Activated B cell treated with CpG ODN at 0.5 μM for 24 hours (primary cell): ENCODE measurements at regions of chr17 and their contacts with region 1.

Region 1: DNA sequence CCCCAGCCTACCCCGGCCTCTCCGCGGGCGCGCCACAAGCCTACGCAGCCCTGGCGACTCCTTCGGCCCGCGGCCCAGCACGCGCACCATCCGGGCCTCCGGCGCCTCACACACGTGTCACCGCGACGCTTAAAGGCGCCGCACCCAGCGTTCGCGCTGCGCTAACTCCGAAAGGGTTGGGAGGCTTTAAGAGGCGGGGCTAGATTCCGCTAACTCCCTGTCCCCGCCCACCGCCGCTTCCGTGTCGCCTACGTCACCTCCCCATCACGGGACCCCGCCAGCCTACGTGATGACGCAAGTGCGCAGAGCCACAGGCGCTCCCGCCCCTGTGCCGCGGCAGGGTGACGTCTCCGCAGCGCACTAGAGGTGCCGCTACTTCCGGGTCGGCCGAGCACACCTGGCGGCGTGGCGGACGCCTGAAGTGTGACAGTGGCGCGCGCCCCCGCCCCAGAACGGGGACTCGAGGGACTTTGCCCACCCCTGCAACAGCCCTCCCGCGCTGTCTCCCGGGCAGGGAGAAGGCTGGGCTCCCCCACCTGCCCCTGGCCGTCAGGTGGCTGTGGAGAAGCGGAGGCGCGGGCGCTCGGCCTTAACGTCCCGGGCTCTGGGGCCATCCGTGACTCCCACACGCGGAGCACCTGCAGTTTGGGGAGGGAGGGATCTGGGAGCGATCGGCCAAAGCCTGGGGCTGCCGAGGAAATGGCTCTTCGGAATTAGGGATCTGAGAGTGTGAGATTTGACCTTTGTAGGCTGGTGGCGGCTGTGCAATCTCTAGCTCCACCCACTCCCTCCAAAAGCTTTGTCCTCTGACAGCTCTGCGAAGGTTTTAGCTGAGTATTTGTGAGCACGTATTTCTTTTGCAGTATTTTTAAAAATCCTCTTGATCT is at the start of gene USP36:
- DNase-seq: peak; percentile 99
- ATAC-seq: peak; percentile 85
- H3K4me3 Mint-ChIP-seq: peak within 1 kb of the TSS; percentile 93
- H3K27ac Mint-ChIP-seq: peak within 1 kb of the TSS; percentile 94
- H3K4me1 Mint-ChIP-seq: peaks cover 42% of the 10 kb centered on the region
- H3K27me3 Mint-ChIP-seq: no peaks in the 10 kb centered on the region
- CTCF ChIP-seq: no peak
- total RNA-seq, gene USP36: 93.8 and 107 TPM in 2 replicates

Region 2: DNA sequence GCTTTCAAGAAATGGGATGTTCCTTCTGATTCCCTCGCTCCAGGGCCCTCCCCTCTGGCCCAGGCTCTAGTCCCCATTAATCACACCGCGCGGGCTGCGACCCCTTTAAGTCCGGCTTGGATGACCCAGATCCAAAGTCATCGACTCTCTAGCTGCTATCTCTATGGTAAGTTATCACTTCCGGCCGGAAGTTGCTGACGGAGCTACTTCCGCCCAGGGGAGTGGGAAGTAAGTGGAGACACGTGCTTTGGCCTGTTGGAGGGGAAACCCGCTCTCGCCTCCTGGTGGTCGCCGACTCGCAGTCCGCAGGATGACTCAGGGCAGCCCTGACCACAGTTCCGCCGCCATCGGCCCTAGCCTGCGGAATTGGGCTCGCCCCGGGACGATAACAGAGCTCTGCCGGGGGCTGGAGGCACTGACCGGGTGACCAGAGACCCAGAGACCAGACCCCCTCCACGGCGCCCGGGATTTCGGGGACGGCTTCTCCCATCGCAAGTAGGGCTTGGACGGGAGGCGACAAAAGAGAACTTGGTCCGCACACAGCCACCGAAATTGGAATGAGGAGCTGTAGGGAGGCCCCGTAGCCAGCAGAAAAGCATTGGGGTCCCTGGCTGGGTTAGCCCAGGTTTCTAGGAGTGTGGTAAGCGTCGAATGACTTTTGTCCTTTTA is 1752.4 kb before region 1 on chr17:
- CTCF ChIA-PET with region 1: no interaction called
- POLR2A ChIA-PET with region 1: no interaction called
- intact Hi-C with region 1: loop called (anchors 2 kb)
- DNase-seq: peak; percentile 84
- ATAC-seq: peak; percentile 89
- H3K4me3 Mint-ChIP-seq: peak overlapping the region; percentile 95
- H3K27ac Mint-ChIP-seq: peak overlapping the region; percentile 95
- H3K4me1 Mint-ChIP-seq: peaks cover 52% of the 10 kb centered on the region
- H3K27me3 Mint-ChIP-seq: peaks cover 3% of the 10 kb centered on the region
- CTCF ChIP-seq: no peak

Region 3: DNA sequence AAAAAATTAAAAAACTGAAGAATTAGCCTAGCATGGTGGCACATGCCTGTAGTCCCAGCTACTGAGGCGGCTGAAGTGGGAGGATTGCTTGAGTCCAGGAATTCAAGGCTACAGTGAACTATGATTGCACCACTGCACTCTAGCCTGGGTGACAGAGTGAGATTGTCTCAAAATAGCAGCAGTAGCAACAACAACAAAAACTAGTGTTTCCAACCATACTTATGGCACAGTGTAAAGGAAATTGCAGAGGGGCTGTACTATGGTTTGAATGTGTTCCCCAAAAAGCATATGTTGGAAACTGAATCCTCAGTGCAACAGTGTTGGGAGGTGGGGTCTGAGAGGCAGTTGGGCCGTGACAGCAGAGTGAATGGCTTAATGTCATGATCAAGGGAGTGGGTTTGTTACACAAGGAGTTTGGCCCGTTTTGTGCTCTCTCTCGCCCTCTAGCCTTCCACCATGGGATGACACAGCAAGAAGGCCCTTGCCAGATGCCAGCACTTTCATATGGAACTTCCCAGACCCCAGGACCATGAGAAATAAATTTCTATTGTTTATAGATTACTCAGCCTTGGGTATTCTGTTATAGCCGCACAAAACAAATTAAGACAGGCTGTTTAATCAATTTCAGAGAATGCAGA is 392.5 kb before region 1 on chr17:
- CTCF ChIA-PET with region 1: no interaction called
- POLR2A ChIA-PET with region 1: no interaction called
- intact Hi-C with region 1: loop called (anchors 5 kb)
- DNase-seq: no peak
- ATAC-seq: no peak
- H3K4me3 Mint-ChIP-seq: no peak overlapping the region
- H3K27ac Mint-ChIP-seq: no peak overlapping the region
- H3K4me1 Mint-ChIP-seq: peaks cover 8% of the 10 kb centered on the region
- H3K27me3 Mint-ChIP-seq: peaks cover 5% of the 10 kb centered on the region
- CTCF ChIP-seq: no peak

Region 4: GRCh38 chr17:78484300-78485246 is 356.4 kb before region 1 on chr17:
- CTCF ChIA-PET with region 1: no interaction called
- POLR2A ChIA-PET with region 1: no interaction called
- intact Hi-C with region 1: no loop called
- DNase-seq: peak; percentile 62
- ATAC-seq: peak; percentile 98
- H3K4me3 Mint-ChIP-seq: peak overlapping the region; percentile 75
- H3K27ac Mint-ChIP-seq: no peak overlapping the region
- H3K4me1 Mint-ChIP-seq: peaks cover 11% of the 10 kb centered on the region
- H3K27me3 Mint-ChIP-seq: peaks cover 15% of the 10 kb centered on the region
- CTCF ChIP-seq: no peak

Region 5: GRCh38 chr17:78497115-78497540 is 343.8 kb before region 1 on chr17:
- CTCF ChIA-PET with region 1: interaction called, 7 read pairs
- POLR2A ChIA-PET with region 1: no interaction called
- intact Hi-C with region 1: loop called (anchors 1 kb)
- DNase-seq: peak; percentile 26
- ATAC-seq: peak; percentile 77
- H3K4me3 Mint-ChIP-seq: no peak overlapping the region
- H3K27ac Mint-ChIP-seq: no peak overlapping the region
- H3K4me1 Mint-ChIP-seq: no peaks in the 10 kb centered on the region
- H3K27me3 Mint-ChIP-seq: no peaks in the 10 kb centered on the region
- CTCF ChIP-seq: peak; percentile 19

Region 6: DNA sequence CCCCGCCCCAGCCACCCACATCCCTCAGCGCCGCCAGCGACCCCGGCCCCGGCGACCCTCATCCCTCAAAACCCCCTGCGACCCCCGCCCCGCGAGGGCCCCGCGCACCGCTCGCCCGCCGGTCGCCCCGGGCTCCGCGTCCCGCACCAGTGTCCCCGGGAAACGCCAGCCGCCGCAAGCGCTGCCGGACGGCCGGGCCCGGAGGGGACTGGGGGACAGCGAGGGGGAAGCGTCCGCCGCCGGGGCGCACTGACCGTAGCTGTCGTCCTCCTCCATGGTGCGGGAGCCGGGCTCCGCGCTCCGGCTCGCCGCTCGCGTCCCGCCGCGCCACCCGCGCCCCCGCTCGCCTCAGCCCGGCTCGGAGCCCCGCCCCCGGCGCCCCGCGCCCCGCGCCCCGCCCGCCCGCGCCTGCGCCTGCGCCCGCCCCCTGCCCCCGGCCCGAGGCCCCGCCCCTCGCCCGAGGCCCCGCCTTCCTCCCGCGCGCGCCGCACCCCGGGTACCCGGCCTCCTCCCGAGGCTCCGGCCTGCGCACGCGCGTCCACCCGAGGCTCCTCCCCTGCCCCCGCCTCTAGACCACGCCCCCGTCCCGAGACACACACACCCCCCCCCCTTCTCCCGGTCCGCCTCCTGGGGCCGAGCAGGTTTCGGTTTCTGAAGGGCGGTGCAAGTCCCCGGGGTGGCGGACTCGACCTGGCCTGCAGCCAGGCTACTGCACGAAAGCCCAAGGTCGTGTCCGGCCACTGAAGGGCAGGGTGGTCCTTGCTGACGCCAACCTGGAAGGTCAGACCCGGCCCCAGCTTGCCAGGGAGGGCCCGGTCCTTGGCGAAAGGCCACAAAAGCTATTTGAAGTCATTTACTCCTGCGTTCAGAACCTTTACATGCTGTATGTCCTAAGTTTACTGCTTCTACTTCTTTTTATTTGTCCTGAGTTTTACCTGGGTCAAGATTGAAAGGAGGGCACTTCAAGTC is 58.7 kb before region 1 on chr17 and contains the start of gene CYTH1:
- CTCF ChIA-PET with region 1: no interaction called
- POLR2A ChIA-PET with region 1: interaction called, 4 read pairs
- intact Hi-C with region 1: loop called (anchors 2 kb)
- DNase-seq: peak; percentile 98
- ATAC-seq: peak; percentile 80
- H3K4me3 Mint-ChIP-seq: peak within 1 kb of the TSS; percentile 92
- H3K27ac Mint-ChIP-seq: peak within 1 kb of the TSS; percentile 93
- H3K4me1 Mint-ChIP-seq: peaks cover 40% of the 10 kb centered on the region
- H3K27me3 Mint-ChIP-seq: no peaks in the 10 kb centered on the region
- CTCF ChIP-seq: no peak
- total RNA-seq, gene CYTH1: 368 and 391 TPM in 2 replicates

Region 7: GRCh38 chr17:78822552-78822951 is 18.4 kb before region 1 on chr17:
- CTCF ChIA-PET with region 1: no interaction called
- POLR2A ChIA-PET with region 1: no interaction called
- intact Hi-C with region 1: no loop called
- DNase-seq: no peak
- ATAC-seq: no peak
- H3K4me3 Mint-ChIP-seq: no peak overlapping the region
- H3K27ac Mint-ChIP-seq: no peak overlapping the region
- H3K4me1 Mint-ChIP-seq: peaks cover 21% of the 10 kb centered on the region
- H3K27me3 Mint-ChIP-seq: no peaks in the 10 kb centered on the region
- CTCF ChIP-seq: no peak

Region 8: GRCh38 chr17:78890498-78890897 is 49.5 kb after region 1 on chr17:
- CTCF ChIA-PET with region 1: no interaction called
- POLR2A ChIA-PET with region 1: interaction called, 7 read pairs
- intact Hi-C with region 1: loop called (anchors 2 kb)
- DNase-seq: peak; percentile 46
- ATAC-seq: peak; percentile 60
- H3K4me3 Mint-ChIP-seq: peak overlapping the region; percentile 60
- H3K27ac Mint-ChIP-seq: peak overlapping the region; percentile 94
- H3K4me1 Mint-ChIP-seq: peaks cover 59% of the 10 kb centered on the region
- H3K27me3 Mint-ChIP-seq: no peaks in the 10 kb centered on the region
- CTCF ChIP-seq: no peak

Region 9: GRCh38 chr17:78925234-78925633 is 84.3 kb after region 1 on chr17 and contains the start of gene TIMP2:
- CTCF ChIA-PET with region 1: no interaction called
- POLR2A ChIA-PET with region 1: no interaction called
- intact Hi-C with region 1: loop called (anchors 1 kb)
- DNase-seq: peak; percentile 62
- ATAC-seq: peak; percentile 81
- H3K4me3 Mint-ChIP-seq: peak within 1 kb of the TSS; percentile 86
- H3K27ac Mint-ChIP-seq: no peak within 1 kb of the TSS
- H3K4me1 Mint-ChIP-seq: peaks cover 15% of the 10 kb centered on the region
- H3K27me3 Mint-ChIP-seq: peaks cover 15% of the 10 kb centered on the region
- CTCF ChIP-seq: no peak
- total RNA-seq, gene TIMP2: 3.5 and 4.2 TPM in 2 replicates

Region 10: DNA sequence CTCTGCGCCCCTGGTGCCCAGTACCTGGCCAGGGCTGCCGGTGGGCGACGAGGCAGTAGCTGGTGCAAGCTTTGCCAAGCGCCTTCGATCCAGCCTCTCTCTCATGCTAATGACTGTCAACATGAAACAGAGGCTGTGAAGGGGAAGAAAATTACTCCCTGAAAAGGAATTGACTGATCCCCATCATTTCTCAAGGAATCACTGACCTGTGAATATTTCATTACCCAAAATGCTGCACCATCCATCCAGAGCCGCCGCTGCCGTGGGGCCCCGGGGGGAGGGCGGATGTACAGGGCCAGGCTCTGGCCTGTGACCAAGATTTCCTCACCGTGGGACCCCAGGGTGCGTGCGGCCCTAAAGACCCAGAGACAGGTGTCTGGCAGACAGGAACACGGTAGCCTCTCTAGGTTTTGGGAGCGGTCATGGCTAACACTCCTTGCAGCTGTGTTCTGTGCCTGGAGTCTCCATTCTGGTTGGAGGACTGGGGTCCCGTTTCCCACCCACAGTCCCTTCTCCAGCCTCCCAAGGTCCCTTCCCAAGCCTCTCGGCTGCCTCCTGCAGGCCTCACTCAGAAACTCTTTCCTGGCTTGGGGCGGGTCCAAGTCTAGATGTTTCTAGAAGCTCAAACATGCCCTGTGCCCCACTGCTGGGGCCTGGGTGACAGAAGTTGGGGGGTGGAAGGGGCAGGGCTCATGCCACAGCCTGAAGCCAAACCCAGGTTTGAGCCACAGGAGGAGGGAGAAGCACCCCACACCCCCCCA is 307.0 kb after region 1 on chr17:
- CTCF ChIA-PET with region 1: no interaction called
- POLR2A ChIA-PET with region 1: no interaction called
- intact Hi-C with region 1: no loop called
- DNase-seq: no peak
- ATAC-seq: no peak
- H3K4me3 Mint-ChIP-seq: no peak overlapping the region
- H3K27ac Mint-ChIP-seq: no peak overlapping the region
- H3K4me1 Mint-ChIP-seq: no peaks in the 10 kb centered on the region
- H3K27me3 Mint-ChIP-seq: peaks cover 6% of the 10 kb centered on the region
- CTCF ChIP-seq: no peak